ENCODE measurements at regions of chr17 and their contacts with region 1.

Region 1: DNA sequence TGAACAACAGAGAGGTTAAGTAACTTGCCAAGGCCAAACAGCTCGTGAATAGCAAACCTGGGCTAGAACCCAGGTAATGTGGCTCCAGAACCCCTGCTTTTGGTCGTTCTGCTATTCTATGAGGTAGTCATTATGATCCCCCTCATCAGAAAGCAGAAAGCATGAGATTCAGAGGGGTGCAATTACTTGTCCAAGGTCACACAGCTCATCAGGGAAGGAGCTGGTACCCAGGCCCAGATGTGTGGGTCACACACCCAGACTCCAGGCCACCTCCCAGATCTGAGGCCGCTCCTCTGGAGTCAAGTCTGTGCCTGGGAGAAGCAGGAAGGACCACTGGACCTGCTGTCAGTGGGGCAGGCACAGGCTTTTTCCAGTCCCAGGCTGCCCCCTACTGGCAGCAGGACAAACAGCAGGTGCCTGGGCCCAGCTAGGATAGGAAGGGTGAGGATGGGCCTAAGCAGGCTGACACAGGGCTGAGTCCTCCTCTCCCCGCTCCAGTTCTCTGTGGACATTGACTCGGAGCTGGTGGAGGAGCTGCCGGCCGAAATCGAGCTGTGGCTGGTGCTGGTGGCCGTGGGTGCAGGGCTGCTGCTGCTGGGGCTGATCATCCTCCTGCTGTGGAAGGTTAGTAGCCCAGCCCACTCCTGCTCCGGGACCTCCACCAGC is 7.8 kb upstream of the PDK2 start:
- DNase-seq: peak; percentile 85
- H3K4me3 Mint-ChIP-seq: no peak overlapping the region
- H3K27ac Mint-ChIP-seq: no peak overlapping the region
- H3K4me1 Mint-ChIP-seq: no peaks in the 10 kb centered on the region
- H3K27me3 Mint-ChIP-seq: no peaks in the 10 kb centered on the region

Region 2: DNA sequence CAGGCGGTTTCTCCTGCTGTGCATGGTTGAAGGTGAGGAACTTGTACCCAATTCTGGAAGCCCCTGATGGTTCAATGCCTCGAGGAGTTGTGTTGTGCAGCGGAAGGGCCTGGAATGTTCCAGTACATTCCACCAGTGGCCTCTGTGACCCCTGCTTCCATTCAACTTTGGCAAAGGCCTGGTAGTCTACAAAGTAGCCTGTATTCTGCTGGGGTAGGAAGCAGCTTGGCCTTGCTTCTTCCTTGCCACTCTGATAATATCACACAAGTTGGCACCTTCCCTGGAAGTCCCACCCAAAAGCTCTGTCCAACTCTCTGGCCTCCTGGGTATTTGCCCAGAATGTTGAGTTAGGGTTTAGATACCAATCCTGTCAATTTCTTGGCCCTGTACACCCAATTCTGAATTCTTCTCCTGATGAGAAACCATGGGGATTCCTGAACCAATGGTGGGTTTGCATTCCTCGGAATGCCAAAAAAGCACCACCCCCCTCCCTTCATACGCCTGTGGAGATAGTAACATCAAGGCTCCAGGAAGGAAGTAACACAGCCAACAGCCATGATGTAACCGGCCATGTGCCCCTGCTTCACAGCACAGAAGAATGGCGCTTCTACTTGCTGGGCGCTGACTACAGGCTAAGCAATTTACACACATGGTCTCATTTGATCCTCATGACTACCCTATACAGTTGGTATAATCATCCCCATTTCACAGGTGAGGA is 311.7 kb before region 1 on chr17:
- CTCF ChIA-PET with region 1: no interaction called
- intact Hi-C with region 1: no loop called
- DNase-seq: no peak
- H3K4me3 Mint-ChIP-seq: no peak overlapping the region
- H3K27ac Mint-ChIP-seq: no peak overlapping the region
- H3K4me1 Mint-ChIP-seq: no peaks in the 10 kb centered on the region
- H3K27me3 Mint-ChIP-seq: no peaks in the 10 kb centered on the region

Region 3: GRCh38 chr17:49880291-49881053 is 206.9 kb before region 1 on chr17:
- CTCF ChIA-PET with region 1: no interaction called
- intact Hi-C with region 1: loop called (anchors 1 kb)
- DNase-seq: peak; percentile 81
- H3K4me3 Mint-ChIP-seq: no peak overlapping the region
- H3K27ac Mint-ChIP-seq: no peak overlapping the region
- H3K4me1 Mint-ChIP-seq: peaks cover 7% of the 10 kb centered on the region
- H3K27me3 Mint-ChIP-seq: peaks cover 32% of the 10 kb centered on the region

Region 4: GRCh38 chr17:50020841-50021599 is 66.4 kb before region 1 on chr17:
- CTCF ChIA-PET with region 1: interaction called, 92 read pairs
- intact Hi-C with region 1: no loop called
- DNase-seq: no peak
- H3K4me3 Mint-ChIP-seq: no peak overlapping the region
- H3K27ac Mint-ChIP-seq: no peak overlapping the region
- H3K4me1 Mint-ChIP-seq: no peaks in the 10 kb centered on the region
- H3K27me3 Mint-ChIP-seq: no peaks in the 10 kb centered on the region

Region 5: GRCh38 chr17:50055426-50056230 is 31.8 kb before region 1 on chr17 and contains the start of gene ITGA3:
- CTCF ChIA-PET with region 1: interaction called, 33 read pairs
- intact Hi-C with region 1: loop called (anchors 1 kb)
- DNase-seq: peak; percentile 85
- H3K4me3 Mint-ChIP-seq: peak within 1 kb of the TSS; percentile 87
- H3K27ac Mint-ChIP-seq: peak within 1 kb of the TSS; percentile 81
- H3K4me1 Mint-ChIP-seq: peaks cover 38% of the 10 kb centered on the region
- H3K27me3 Mint-ChIP-seq: no peaks in the 10 kb centered on the region
- total RNA-seq, gene ITGA3: 17.9 to 19.3 TPM

Region 6: DNA sequence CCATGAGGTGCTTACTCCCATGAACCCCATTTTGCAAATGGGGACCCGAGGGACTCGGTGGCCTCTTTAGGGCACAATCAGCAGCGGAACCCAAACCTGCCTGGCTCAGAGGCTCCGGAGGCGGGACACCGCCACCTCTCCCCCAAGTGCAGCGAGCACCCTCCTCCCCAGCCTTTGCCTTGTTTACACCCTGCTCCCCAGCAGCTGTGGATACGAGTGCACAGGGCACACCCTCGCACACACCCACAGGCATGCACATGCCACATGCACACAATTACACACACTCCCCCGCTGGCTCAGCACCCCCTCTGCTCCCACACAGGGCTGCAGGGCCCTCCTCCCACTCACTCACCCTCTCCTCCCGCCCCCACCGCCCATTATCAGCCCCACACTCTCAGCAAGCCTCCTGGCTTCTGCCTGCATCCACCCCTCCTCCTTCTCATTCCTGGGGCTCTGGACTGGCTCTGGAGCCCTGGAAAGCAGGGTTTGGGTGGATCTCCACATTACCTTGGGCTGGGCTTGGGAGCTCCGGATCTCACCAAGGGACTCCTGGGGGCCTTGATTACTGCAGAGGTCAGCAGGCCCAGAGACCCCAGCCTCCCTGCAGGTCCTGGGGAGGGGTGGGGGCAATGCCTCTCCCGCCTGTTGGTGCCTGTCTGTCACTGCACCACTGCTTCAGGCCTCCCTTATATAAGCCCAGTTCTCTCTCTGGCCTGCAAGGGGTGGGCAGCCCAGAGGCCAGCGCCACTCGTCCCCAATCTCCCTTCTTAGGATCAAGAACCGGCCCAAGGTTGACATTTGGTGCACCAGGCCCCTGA is 14.2 kb after region 1 on chr17:
- CTCF ChIA-PET with region 1: interaction called, 12 read pairs
- intact Hi-C with region 1: no loop called
- DNase-seq: no peak
- H3K4me3 Mint-ChIP-seq: no peak overlapping the region
- H3K27ac Mint-ChIP-seq: no peak overlapping the region
- H3K4me1 Mint-ChIP-seq: peaks cover 2% of the 10 kb centered on the region
- H3K27me3 Mint-ChIP-seq: no peaks in the 10 kb centered on the region

Region 7: DNA sequence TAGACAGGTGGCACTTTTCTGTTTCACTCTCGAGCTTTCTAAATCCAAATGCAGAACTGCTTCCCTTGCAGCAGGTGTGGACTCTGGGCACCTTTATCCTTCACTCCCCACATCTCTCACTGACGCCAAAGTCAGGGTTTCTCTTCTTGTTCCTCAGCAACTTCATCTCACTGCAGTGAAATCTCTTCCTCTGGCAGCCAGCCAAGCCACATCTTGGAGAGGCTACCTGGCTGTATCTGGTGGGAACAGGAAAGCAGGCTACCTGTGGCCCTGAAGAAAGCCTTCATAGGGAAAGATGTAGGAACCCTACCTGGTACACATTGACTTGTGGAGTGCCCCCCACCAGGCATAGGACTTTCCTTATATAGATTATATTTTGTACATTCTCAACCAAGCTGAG is 1332.1 kb after region 1 on chr17:
- CTCF ChIA-PET with region 1: no interaction called
- intact Hi-C with region 1: no loop called
- DNase-seq: no peak
- H3K4me3 Mint-ChIP-seq: no peak overlapping the region
- H3K27ac Mint-ChIP-seq: no peak overlapping the region
- H3K4me1 Mint-ChIP-seq: peaks cover 34% of the 10 kb centered on the region
- H3K27me3 Mint-ChIP-seq: no peaks in the 10 kb centered on the region

Measured in activated naive CD4-positive, alpha-beta T cell treated with anti-CD3 and anti-CD28 coated beads for 36 hours (primary cell).